Activated naive CD4-positive, alpha-beta T cell treated with anti-CD3 and anti-CD28 coated beads, Interleukin-2, amount 10 ng/mL, durations not matched to agents 7 days and 5 days (primary cell): ENCODE measurements at regions of chr5 and their contacts with region 1.

Region 1: DNA sequence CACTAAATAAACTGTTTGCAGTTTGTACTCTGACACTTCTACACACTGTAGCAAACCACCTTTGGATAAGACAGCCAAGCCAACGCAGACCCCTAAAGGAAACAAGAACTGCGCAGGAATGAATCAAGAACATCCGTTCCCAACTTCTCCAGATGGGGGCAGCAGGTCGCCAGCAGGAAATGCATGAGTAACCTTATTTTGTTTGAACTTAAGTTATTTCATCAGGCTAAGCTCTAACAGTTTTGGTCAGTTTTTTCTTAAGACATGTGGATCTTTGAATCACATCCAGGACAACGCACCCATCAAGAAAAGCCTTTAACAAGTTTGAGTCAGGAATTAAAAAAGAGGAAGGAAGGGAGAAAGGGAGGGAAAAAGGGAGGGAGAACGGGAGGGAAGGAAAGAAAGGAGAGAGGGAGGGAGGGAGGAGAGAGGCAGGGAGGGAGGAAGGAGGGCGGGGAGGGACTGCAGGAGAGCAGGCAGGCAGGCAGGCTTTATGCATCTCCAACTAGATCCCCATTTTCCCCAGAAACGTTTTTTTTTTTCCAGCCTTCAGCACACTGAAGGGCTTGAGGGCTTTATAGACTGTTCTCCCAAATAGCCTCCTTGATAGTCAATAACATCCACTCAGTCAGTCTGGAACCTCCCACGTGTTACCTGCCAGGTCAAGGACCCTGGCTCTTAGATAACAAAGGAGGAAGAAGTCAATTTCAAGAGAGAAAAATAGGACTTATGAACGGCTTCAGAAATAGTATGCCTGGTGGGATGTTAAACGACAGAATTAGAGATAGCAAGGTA is 22.2 kb downstream of the BHMT start:
- DNase-seq: peak; percentile 76
- H3K4me3 Mint-ChIP-seq: no peak overlapping the region
- H3K27ac Mint-ChIP-seq: no peak overlapping the region
- H3K4me1 Mint-ChIP-seq: peaks cover 13% of the 10 kb centered on the region
- H3K27me3 Mint-ChIP-seq: peaks cover 7% of the 10 kb centered on the region

Region 2: DNA sequence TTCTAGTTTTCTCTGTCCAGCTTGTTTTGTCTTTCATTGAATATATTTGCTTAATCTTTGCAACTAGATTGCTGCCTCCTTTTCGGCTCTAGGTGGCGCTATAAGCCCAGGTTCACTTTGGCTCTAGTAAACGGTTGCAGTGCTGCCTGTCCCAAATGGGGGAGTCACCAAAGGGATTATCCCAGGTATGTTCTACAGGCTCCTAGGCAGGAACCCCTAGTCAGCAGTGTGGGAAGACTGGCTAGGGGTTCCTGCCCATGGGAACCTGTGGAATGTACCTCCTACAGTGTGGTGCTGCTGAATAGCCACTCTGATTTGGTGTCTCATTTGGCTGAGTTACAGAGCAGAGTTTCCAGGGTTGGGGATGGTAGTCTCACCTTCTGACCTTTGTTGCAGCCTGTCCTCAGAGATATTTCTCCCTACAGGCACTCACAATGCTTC is 233.9 kb before region 1 on chr5:
- CTCF ChIA-PET with region 1: interaction called, 12 read pairs
- DNase-seq: peak; percentile 50
- H3K4me3 Mint-ChIP-seq: no peak overlapping the region
- H3K27ac Mint-ChIP-seq: no peak overlapping the region
- H3K4me1 Mint-ChIP-seq: no peaks in the 10 kb centered on the region
- H3K27me3 Mint-ChIP-seq: no peaks in the 10 kb centered on the region

Region 3: DNA sequence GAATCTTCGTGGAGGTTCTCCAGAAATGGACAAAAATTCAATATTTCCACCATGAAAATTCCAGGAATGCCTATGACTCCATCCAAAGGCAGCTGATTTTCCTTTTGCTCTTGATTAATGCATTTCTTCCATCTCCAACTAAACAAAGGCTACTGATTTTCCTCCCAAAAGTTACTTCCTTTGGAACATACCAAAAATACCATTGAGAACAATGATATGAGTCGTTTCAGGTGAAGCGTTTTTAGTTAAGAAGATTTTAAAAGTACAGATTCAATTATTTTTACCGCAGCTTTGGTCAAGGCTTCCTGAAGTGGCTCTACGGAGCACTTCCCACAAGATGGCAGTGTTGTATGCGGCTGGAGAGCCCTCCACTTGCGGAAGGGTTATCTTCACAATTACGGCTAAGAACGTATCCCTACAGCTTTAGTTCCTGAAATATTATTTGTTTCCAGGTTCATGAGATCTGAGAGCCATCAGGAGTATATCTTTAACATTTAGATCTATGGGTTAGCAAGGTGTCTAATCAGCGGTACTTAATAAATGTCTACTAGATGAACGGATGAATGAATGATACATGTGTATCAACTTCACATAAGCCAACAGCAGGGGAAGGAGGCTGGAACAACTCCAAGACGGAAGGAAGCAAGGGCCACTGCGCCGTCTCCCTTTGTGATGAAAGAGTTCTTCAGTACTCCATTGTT is 112.8 kb before region 1 on chr5:
- CTCF ChIA-PET with region 1: interaction called, 291 read pairs
- DNase-seq: peak; percentile 54
- H3K4me3 Mint-ChIP-seq: no peak overlapping the region
- H3K27ac Mint-ChIP-seq: no peak overlapping the region
- H3K4me1 Mint-ChIP-seq: peaks cover 4% of the 10 kb centered on the region
- H3K27me3 Mint-ChIP-seq: peaks cover 45% of the 10 kb centered on the region

Region 4: DNA sequence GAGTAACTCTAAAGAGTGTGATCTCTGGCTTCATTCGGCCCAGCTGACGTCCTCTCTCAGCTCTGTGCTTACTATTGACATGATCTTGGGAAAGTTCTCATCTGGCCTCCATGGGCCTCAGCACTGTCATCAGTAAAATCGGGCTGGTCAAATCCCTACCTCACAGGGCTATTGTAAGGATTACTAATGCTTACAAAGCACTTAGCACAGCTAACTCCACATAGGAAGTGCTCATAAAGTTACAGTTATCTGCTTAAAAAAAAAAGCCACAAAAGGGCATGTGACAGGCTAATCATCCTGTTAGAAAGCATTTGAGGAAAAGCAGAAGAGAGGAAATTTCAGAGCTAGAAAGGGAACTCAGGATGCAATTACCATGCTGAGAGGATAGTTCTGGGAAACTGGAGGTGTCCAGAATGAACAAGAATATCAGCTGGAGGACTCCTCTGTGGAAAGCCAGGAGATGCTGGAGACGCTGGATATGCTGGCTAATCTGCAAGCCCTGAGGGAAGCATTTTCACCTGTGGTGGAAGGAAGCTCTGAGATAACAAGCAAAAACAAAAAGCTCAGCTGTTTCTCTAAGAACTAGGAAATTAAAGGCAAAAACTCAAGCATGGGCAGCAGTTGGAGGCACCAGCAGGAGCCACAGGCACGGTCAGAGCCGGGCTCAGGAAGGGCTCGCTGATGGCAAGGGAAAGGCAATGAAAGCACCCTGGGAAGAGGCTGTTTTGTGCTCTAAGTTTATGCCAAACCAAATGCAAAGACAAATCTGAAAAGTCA is 26.6 kb before region 1 on chr5:
- CTCF ChIA-PET with region 1: interaction called, 10 read pairs
- DNase-seq: no peak
- H3K4me3 Mint-ChIP-seq: no peak overlapping the region
- H3K27ac Mint-ChIP-seq: no peak overlapping the region
- H3K4me1 Mint-ChIP-seq: no peaks in the 10 kb centered on the region
- H3K27me3 Mint-ChIP-seq: peaks cover 45% of the 10 kb centered on the region

Region 5: DNA sequence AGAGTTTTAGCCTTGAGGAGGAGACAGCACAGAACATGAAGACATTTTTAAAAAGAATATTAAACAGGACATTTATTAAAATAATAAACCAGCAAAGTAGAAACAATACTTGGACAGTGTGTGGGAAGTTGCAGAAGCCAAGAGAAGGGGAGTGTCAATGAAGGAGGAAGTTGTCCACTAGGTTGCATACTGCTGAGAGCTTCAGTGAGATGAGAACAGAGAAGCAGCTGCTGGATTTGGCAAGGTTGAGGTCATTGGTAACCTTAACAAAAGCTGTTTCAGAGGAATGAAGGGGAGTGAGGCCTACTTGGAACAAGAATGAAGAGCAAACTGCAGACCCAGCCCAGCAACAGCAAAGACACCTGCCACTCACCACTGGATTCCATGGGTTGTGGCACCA is 10.9 kb before region 1 on chr5:
- CTCF ChIA-PET with region 1: interaction called, 10 read pairs
- DNase-seq: no peak
- H3K4me3 Mint-ChIP-seq: no peak overlapping the region
- H3K27ac Mint-ChIP-seq: no peak overlapping the region
- H3K4me1 Mint-ChIP-seq: no peaks in the 10 kb centered on the region
- H3K27me3 Mint-ChIP-seq: peaks cover 10% of the 10 kb centered on the region

Region 6: DNA sequence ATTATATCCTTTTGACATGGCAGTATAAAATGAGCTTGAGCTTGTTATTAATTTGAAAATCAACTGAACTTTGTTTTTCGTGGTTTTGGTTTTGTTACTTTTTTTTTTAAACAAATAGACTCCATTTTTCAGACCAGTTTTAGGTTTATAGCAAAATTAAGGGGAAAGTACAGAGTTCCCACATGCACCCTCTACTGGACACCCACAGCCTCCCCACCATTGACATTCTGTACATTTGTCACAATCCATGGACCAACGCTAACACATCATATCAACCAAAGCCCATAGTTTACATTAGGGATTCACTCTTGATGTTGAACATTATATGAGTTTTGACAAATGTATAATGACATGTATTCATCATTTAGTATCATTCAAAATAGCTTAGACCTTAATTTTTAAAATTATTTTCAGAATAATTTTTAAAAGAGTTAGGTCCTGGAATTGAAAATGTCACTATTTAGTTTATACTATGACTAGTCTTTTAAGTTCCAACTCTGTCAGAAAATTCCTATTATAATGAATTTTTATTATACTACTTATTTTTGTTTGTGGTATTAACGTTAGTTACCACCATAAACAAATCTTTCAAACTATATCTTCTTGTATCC is 66.8 kb after region 1 on chr5:
- CTCF ChIA-PET with region 1: no interaction called
- DNase-seq: no peak
- H3K4me3 Mint-ChIP-seq: no peak overlapping the region
- H3K27ac Mint-ChIP-seq: no peak overlapping the region
- H3K4me1 Mint-ChIP-seq: no peaks in the 10 kb centered on the region
- H3K27me3 Mint-ChIP-seq: peaks cover 4% of the 10 kb centered on the region

Region 7: GRCh38 chr5:79464695-79465332 is 331.0 kb after region 1 on chr5:
- CTCF ChIA-PET with region 1: interaction called, 73 read pairs
- DNase-seq: no peak
- H3K4me3 Mint-ChIP-seq: no peak overlapping the region
- H3K27ac Mint-ChIP-seq: no peak overlapping the region
- H3K4me1 Mint-ChIP-seq: no peaks in the 10 kb centered on the region
- H3K27me3 Mint-ChIP-seq: peaks cover 9% of the 10 kb centered on the region

Region 8: GRCh38 chr5:79512471-79513307 is 378.8 kb after region 1 on chr5:
- CTCF ChIA-PET with region 1: no interaction called
- DNase-seq: no peak
- H3K4me3 Mint-ChIP-seq: peak overlapping the region; percentile 98
- H3K27ac Mint-ChIP-seq: no peak overlapping the region
- H3K4me1 Mint-ChIP-seq: peaks cover 33% of the 10 kb centered on the region
- H3K27me3 Mint-ChIP-seq: peaks cover 58% of the 10 kb centered on the region